ENCODE measurements at regions of chr5 and their contacts with region 1.

Region 1: DNA sequence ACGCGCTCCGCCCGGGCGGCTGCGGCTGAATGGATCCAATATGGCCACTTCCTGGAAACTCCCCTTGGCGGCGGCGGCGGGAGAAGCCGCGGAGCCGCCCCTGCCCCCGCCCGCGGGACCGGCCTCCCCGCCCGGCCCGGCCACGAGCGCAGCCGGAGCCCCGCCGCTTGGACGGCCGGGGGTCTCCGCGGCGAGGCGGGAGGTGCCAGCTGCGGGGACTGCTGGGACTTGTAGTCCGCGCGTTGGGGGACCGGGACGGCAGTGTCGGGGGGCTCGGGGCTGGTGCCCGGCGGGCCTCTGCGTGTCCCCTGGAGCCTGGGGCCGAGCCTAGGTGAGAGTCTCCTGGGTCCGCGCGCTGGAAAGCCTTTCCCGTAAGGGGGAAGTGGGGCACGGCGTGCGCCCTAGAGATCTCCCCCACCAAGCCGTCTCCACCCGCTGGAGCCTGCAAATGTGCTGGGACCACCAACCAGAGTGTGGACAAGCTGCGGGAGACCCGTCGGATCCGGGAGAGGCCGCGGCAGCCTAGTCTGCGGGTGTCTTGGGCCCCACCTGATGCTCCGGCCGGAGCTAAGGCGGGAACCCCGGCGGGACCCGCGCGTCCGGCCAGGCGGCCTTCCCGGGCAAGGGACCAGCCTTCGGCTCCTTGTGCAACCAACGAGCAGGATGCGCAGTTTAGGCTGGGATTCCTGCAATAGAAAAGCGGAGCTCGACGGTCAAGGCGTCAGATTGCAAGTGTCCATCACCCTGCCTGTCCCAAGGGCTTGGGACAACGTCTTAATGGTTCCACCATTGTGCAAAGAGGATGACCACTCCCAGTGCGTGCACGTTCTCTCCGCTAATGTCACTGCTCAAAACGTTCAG is at the start of gene SEPTIN8:
- DNase-seq: no peak
- ATAC-seq: peak; percentile 74
- H3K4me3 ChIP-seq: peak within 1 kb of the TSS; percentile 83
- H3K27ac ChIP-seq: peak within 1 kb of the TSS; percentile 50
- H3K4me1 ChIP-seq: peaks cover 7% of the 10 kb centered on the region
- H3K27me3 ChIP-seq: no peaks in the 10 kb centered on the region
- CTCF ChIP-seq: no peak
- EP300 ChIP-seq: no peak
- POLR2A ChIP-seq: 0 out of 2 replicates have a peak, but pooled peaks have one; percentile 8
- RAD21 ChIP-seq: no peak
- polyA plus RNA-seq, gene SEPTIN8: 6.1 to 7.6 TPM

Region 2: GRCh38 chr5:132746954-132747615 is 30.4 kb before region 1 on chr5 and contains the start of gene CCNI2:
- CTCF ChIA-PET with region 1: interaction called, 6 read pairs
- POLR2A ChIA-PET with region 1: interaction called, 56 read pairs
- RAD21 ChIA-PET with region 1: interaction called, 9 read pairs
- SMC1A ChIA-PET with region 1: interaction called, 88 read pairs
- in situ Hi-C with region 1: no loop called
- intact Hi-C with region 1: no loop called
- DNase-seq: no peak
- ATAC-seq: peak; percentile 71
- H3K4me3 ChIP-seq: peak within 1 kb of the TSS; percentile 72
- H3K27ac ChIP-seq: no peak within 1 kb of the TSS
- H3K4me1 ChIP-seq: peaks cover 23% of the 10 kb centered on the region
- H3K27me3 ChIP-seq: no peaks in the 10 kb centered on the region
- CTCF ChIP-seq: peak; percentile 47 to 56 (median 53)
- EP300 ChIP-seq: no peak
- POLR2A ChIP-seq: peak; percentile 67
- RAD21 ChIP-seq: peak; percentile 20; the same call in 1 of the 2 replicates
- polyA plus RNA-seq, gene CCNI2: 3.1 to 8.0 TPM

Region 3: GRCh38 chr5:132797651-132798050 is 20.2 kb after region 1 on chr5:
- CTCF ChIA-PET with region 1: interaction called, 5 read pairs
- POLR2A ChIA-PET with region 1: interaction called, 9 read pairs
- RAD21 ChIA-PET with region 1: interaction called, 4 read pairs
- SMC1A ChIA-PET with region 1: interaction called, 13 read pairs
- in situ Hi-C with region 1: no loop called
- intact Hi-C with region 1: no loop called
- DNase-seq: no peak
- ATAC-seq: no peak
- H3K4me3 ChIP-seq: no peak overlapping the region
- H3K27ac ChIP-seq: no peak overlapping the region
- H3K4me1 ChIP-seq: no peaks in the 10 kb centered on the region
- H3K27me3 ChIP-seq: no peaks in the 10 kb centered on the region
- CTCF ChIP-seq: no peak
- EP300 ChIP-seq: no peak
- POLR2A ChIP-seq: no peak
- RAD21 ChIP-seq: no peak

Region 4: DNA sequence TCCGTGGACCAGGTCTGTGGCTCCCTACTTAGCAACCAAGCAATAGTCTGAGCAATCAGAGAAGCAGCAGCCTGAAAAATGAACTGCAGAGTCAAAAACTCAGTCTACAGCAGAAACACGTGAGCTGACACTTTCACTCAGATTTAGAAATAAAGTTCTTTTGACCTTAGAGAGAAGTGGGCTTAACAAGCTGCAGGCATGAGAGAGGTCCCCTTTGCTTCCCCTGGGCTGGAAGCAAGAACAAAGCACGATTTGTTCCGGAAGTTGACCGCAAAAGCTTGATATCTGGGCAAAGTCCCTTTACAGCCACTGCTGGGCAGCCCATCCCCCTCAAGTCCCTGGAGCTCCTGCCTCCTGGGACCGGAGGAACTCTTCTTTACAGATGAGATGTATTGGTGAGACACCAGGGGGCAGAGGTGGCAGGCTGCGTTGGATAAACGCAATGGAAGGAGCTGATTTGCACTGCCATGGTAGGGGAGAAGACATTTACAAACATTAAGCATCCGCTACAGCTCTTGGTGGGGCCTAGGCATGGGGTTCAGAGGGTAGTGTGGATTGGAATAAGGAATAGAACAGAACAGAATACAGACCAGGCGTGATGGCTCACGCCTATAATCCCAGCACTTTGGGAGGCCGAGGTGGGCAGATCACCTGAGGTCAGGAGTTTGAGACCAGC is 29.9 kb after region 1 on chr5:
- CTCF ChIA-PET with region 1: interaction called, 5 read pairs
- POLR2A ChIA-PET with region 1: interaction called, 6 read pairs
- RAD21 ChIA-PET with region 1: interaction called, 8 read pairs
- SMC1A ChIA-PET with region 1: interaction called, 13 read pairs
- in situ Hi-C with region 1: no loop called
- intact Hi-C with region 1: no loop called
- DNase-seq: peak; percentile 20
- ATAC-seq: peak; percentile 94
- H3K4me3 ChIP-seq: no peak overlapping the region
- H3K27ac ChIP-seq: no peak overlapping the region
- H3K4me1 ChIP-seq: no peaks in the 10 kb centered on the region
- H3K27me3 ChIP-seq: peaks cover 0 to 4% of the 10 kb centered on the region in 2 experiments; a peak in 2 of 4 replicates
- CTCF ChIP-seq: peak; percentile 3 to 45 (median 36); a peak in 3 of 6 replicates
- EP300 ChIP-seq: peak; percentile 17 to 59; a peak in 2 of 4 replicates
- POLR2A ChIP-seq: no peak
- RAD21 ChIP-seq: no peak

Region 5: GRCh38 chr5:133062276-133062675 is 284.8 kb after region 1 on chr5:
- CTCF ChIA-PET with region 1: no interaction called
- POLR2A ChIA-PET with region 1: no interaction called
- RAD21 ChIA-PET with region 1: no interaction called
- SMC1A ChIA-PET with region 1: no interaction called
- in situ Hi-C with region 1: no loop called
- intact Hi-C with region 1: no loop called
- DNase-seq: no peak
- ATAC-seq: no peak
- H3K4me3 ChIP-seq: no peak overlapping the region
- H3K27ac ChIP-seq: no peak overlapping the region
- H3K4me1 ChIP-seq: peaks cover 5% of the 10 kb centered on the region
- H3K27me3 ChIP-seq: no peaks in the 10 kb centered on the region
- CTCF ChIP-seq: no peak
- EP300 ChIP-seq: no peak
- POLR2A ChIP-seq: no peak
- RAD21 ChIP-seq: no peak

Measured in GM12878 (cell line).